ENCODE measurements at regions of chr10 and their contacts with region 1.

Region 1: DNA sequence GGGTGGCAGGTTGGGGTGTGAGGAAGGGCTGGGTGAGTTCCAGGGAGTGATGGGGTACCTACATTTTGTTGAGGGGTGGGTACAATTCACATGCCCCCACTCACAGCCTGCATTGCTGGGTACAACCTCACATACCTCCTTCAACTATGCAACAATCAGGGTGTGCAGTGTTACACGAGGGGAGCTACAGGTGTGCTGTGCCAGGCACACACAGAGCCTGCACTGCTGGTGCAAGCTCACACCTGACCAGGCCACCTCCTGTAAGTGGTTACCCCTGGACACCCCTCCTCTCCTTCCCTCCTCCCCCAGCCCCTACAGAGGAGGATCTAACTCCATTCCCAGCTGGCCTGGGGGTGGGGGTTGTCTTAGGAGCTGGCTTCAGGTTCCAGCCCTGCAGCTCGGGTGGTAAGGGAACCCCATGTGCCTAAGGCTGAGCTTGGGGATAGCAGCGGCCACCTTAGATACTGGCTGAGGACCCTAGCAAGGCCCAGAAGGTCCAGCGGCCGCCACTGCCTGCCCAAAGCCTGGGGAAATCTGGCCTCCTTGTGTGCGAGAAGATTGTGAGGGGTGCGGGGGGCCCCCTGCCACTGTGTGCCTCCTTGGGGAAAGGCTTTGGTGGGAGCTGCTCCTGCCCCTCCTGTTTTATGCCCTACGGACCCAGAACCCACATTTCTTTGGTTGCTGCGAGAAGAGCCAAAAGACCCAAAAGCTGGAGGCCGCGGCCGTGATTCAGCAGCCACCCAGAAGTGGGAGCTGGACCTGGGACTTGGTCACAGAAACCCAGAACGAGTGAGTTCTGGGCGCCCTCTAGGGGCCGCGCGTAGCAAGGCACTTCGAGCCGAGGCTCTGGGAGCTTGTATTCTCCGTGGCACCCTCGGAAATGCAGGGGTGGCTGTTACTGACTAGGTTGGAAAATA is 10.8 kb downstream of the TLX1 start:
- DNase-seq: peak; percentile 54 to 83 (median 67)
- H3K4me3 ChIP-seq: no peak overlapping the region
- H3K27ac ChIP-seq: no peak overlapping the region
- H3K4me1 ChIP-seq: no peaks in the 10 kb centered on the region
- H3K27me3 ChIP-seq: peaks cover 7% of the 10 kb centered on the region
- CTCF ChIP-seq: peak; percentile 51 to 74 (median 59)
- EP300 ChIP-seq: no peak
- POLR2A ChIP-seq: no peak

Region 2: GRCh38 chr10:101050208-101051069 is 91.4 kb before region 1 on chr10:
- intact Hi-C with region 1: loop called in 1 of 4 experiments (anchors 10 kb)
- DNase-seq: peak in 3 of 5 donors; percentile 59 to 65 (median 60)
- H3K4me3 ChIP-seq: no peak overlapping the region
- H3K27ac ChIP-seq: no peak overlapping the region
- H3K4me1 ChIP-seq: no peaks in the 10 kb centered on the region
- H3K27me3 ChIP-seq: peaks cover 8% of the 10 kb centered on the region
- CTCF ChIP-seq: peak; percentile 16 to 48 (median 24)
- EP300 ChIP-seq: no peak
- POLR2A ChIP-seq: no peak

Region 3: GRCh38 chr10:101091546-101092481 is 50.1 kb before region 1 on chr10:
- intact Hi-C with region 1: loop called in 1 of 4 experiments (anchors 5 kb)
- DNase-seq: no peak
- H3K4me3 ChIP-seq: no peak overlapping the region
- H3K27ac ChIP-seq: no peak overlapping the region
- H3K4me1 ChIP-seq: no peaks in the 10 kb centered on the region
- H3K27me3 ChIP-seq: no peaks in the 10 kb centered on the region
- CTCF ChIP-seq: no peak
- EP300 ChIP-seq: no peak
- POLR2A ChIP-seq: no peak

Measured in ovary (tissue), 10 donors.